SK-N-SH (cell line): ENCODE measurements at regions of chr7 and their contacts with region 1.

Region 1: DNA sequence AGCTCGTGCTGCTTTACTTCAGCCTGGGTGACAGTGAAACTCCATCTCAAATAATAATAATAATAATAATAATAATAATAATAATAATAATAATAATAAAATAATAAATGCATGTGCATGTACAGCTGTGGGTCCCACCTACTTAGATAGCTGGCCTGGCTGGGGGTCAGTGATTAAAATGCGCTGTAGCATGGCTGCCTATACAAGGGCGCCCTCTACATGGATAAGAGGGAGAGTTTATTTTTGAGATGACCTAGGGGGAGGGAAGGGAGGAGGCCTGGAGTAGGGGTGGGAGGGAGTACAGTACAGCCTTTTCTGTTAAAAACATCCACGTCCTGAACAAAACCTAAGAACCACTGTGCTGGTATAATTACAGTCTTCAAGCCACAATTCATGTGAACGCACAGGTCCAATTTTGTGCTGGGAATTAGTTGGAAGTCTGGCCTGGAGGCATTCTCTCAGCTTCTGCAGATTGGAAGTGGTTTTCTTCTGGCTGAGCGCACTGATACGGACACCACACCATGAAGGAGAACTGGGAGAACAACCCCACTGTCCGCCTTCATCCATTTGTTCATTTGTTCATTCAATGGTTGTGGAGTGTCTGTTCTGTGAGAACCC is 146.5 kb downstream of the TMEM178B start:
- DNase-seq: peak; percentile 86
- H3K4me3 ChIP-seq: peak overlapping the region in 1 of 2 experiments; percentile 47; a peak in 1 of 4 replicates
- H3K27ac ChIP-seq: no peak overlapping the region
- H3K4me1 ChIP-seq: peaks cover 0 to 22% of the 10 kb centered on the region in 2 experiments; a peak in 1 of 4 replicates
- H3K27me3 ChIP-seq: no peaks in the 10 kb centered on the region
- CTCF ChIP-seq: no peak
- EP300 ChIP-seq: no peak
- RAD21 ChIP-seq: peak; percentile 90

Region 2: DNA sequence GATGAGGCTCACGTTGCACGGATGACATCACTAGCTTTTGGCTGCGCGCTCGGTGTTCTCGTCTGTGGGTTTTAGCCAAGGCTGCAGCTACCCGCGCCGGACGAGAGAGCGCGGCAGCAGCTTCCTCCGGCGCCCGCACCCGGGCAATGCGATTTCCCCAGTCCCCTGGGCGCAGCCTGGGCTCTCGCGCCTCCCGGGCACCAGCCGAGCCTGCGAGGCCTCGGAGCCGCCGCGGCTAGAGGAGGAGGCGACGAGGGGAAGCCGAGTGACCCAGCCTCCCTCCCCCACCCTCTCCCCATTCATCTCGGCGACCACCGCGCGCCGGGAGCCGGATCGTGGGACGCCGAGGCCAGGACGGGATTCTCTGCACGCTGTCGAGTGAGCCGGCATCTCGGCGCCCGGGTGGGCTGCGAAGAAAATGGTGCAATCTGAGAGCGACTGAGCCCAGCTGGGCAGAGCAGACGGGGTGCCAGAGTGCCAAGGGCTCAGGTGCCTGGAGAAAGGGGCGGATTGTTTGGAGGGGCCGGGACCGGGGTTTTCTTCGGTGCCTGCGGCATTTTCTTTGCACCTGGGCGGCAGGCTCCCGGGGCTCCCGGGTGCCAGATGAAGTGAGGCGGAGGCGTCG is 147.7 kb before region 1 on chr7:
- CTCF ChIA-PET with region 1: interaction called, 165 read pairs
- POLR2A ChIA-PET with region 1: interaction called, 10 read pairs
- DNase-seq: peak; percentile 84
- H3K4me3 ChIP-seq: peak overlapping the region; percentile 63 to 64
- H3K27ac ChIP-seq: peak overlapping the region in 1 of 2 experiments; percentile 67; a peak in 1 of 4 replicates
- H3K4me1 ChIP-seq: peaks cover 4 to 28% of the 10 kb centered on the region in 2 experiments; a peak in 2 of 4 replicates
- H3K27me3 ChIP-seq: peaks cover 38% of the 10 kb centered on the region
- CTCF ChIP-seq: no peak
- EP300 ChIP-seq: no peak
- RAD21 ChIP-seq: peak; percentile 13; the same call in 1 of the 2 replicates

Region 3: DNA sequence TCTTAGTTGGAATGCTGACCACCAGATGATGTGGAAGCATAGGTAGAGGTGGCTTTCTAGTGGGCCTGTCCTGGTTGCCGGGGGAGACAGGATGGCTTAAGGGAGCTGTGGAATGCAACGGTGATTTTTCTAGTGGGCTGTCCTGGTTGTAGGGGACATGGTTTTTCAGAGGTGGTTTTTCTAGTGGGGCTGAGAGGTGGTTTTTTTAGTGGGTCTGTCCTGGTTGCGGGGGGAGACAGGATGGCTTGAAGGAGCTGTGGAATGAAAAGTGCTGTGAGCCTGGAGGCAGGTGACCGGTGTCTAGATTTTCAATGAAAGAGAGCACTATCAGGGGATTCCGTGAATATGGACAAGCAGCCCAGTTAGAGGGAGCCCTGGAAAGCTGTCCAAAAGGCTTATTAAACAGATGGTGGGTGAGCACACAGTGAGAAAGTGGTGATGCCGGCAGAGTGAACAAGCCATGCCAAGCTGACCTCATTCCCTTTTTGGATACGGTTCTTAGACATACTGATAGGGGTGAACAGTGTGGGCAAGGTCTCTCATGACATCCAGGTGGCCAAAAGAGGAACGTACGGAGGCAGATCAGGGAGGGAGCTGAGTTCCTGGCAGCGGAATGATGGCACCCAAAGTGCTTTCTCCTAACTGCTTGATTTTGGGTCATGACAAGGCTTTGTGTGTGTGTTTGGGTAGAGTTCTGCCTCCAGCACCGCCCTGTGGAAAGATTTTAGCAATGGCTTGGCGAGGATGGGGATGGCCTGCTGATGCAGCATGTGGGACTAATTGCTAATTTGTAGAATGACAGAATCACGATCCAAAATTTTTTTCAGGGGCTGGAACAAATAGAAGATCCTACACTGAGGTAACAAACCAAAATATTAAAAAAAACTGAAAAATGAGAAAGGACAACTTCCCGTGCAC is 19.9 kb before region 1 on chr7:
- CTCF ChIA-PET with region 1: interaction called, 16 read pairs
- POLR2A ChIA-PET with region 1: interaction called, 4 read pairs
- DNase-seq: no peak
- H3K4me3 ChIP-seq: no peak overlapping the region
- H3K27ac ChIP-seq: no peak overlapping the region
- H3K4me1 ChIP-seq: peaks cover 0 to 17% of the 10 kb centered on the region in 2 experiments; a peak in 1 of 4 replicates
- H3K27me3 ChIP-seq: no peaks in the 10 kb centered on the region
- CTCF ChIP-seq: no peak
- EP300 ChIP-seq: no peak
- RAD21 ChIP-seq: no peak

Region 4: GRCh38 chr7:141231018-141231792 is 10.8 kb after region 1 on chr7:
- CTCF ChIA-PET with region 1: interaction called, 34 read pairs
- POLR2A ChIA-PET with region 1: no interaction called
- DNase-seq: peak; percentile 72
- H3K4me3 ChIP-seq: no peak overlapping the region
- H3K27ac ChIP-seq: no peak overlapping the region
- H3K4me1 ChIP-seq: peaks cover 0 to 6% of the 10 kb centered on the region in 2 experiments; a peak in 2 of 4 replicates
- H3K27me3 ChIP-seq: no peaks in the 10 kb centered on the region
- CTCF ChIP-seq: no peak
- EP300 ChIP-seq: no peak
- RAD21 ChIP-seq: peak; percentile 86